ENCODE measurements at regions of chr1 and their contacts with region 1.

Region 1: GRCh38 chr1:186985889-186986491 is 157.2 kb downstream of the PLA2G4A start:
- DNase-seq: no peak
- H3K4me3 ChIP-seq: no peak overlapping the region
- H3K27ac ChIP-seq: peak overlapping the region in 2 of 4 donors; percentile 11 to 66
- H3K4me1 ChIP-seq: peaks cover 0 to 14% (median 6%) of the 10 kb centered on the region in 4 donors
- H3K27me3 ChIP-seq: no peaks in the 10 kb centered on the region
- CTCF ChIP-seq: peak; percentile 55 to 85 (median 63)
- EP300 ChIP-seq: no peak
- POLR2A ChIP-seq: no peak

Region 2: GRCh38 chr1:186404454-186405051 is 581.4 kb before region 1 on chr1:
- in situ Hi-C with region 1: loop called in 1 of 4 experiments (anchors 10 kb)
- intact Hi-C with region 1: no loop called
- DNase-seq: no peak
- H3K4me3 ChIP-seq: no peak overlapping the region
- H3K27ac ChIP-seq: no peak overlapping the region
- H3K4me1 ChIP-seq: no peaks in the 10 kb centered on the region
- H3K27me3 ChIP-seq: no peaks in the 10 kb centered on the region
- CTCF ChIP-seq: peak; percentile 51 to 64 (median 62)
- EP300 ChIP-seq: no peak
- POLR2A ChIP-seq: no peak

Region 3: GRCh38 chr1:186482661-186483255 is 503.2 kb before region 1 on chr1:
- in situ Hi-C with region 1: loop called in 2 of 4 experiments (anchors 5 to 10 kb)
- intact Hi-C with region 1: no loop called
- DNase-seq: peak; percentile 25
- H3K4me3 ChIP-seq: no peak overlapping the region
- H3K27ac ChIP-seq: no peak overlapping the region
- H3K4me1 ChIP-seq: no peaks in the 10 kb centered on the region
- H3K27me3 ChIP-seq: no peaks in the 10 kb centered on the region
- CTCF ChIP-seq: peak; percentile 54 to 67 (median 63)
- EP300 ChIP-seq: no peak
- POLR2A ChIP-seq: no peak

Region 4: GRCh38 chr1:186605762-186606350 is 380.1 kb before region 1 on chr1:
- in situ Hi-C with region 1: loop called (anchors 10 to 25 kb)
- intact Hi-C with region 1: loop called (anchors 2 kb)
- DNase-seq: peak; percentile 30
- H3K4me3 ChIP-seq: no peak overlapping the region
- H3K27ac ChIP-seq: no peak overlapping the region
- H3K4me1 ChIP-seq: no peaks in the 10 kb centered on the region
- H3K27me3 ChIP-seq: no peaks in the 10 kb centered on the region
- CTCF ChIP-seq: peak; percentile 37 to 59 (median 46)
- EP300 ChIP-seq: no peak
- POLR2A ChIP-seq: no peak

Region 5: GRCh38 chr1:186618401-186619170 is 367.4 kb before region 1 on chr1:
- in situ Hi-C with region 1: loop called in 3 of 4 experiments (anchors 10 to 25 kb)
- intact Hi-C with region 1: no loop called
- DNase-seq: peak; percentile 66
- H3K4me3 ChIP-seq: peak overlapping the region in 2 of 4 donors; percentile 12 to 40
- H3K27ac ChIP-seq: peak overlapping the region in 3 of 4 donors; percentile 1 to 43 (median 17)
- H3K4me1 ChIP-seq: peaks cover 0 to 14% (median 0%) of the 10 kb centered on the region in 4 donors
- H3K27me3 ChIP-seq: no peaks in the 10 kb centered on the region
- CTCF ChIP-seq: no peak
- EP300 ChIP-seq: no peak
- POLR2A ChIP-seq: no peak

Region 6: GRCh38 chr1:186722711-186723309 is 263.2 kb before region 1 on chr1:
- in situ Hi-C with region 1: loop called in 1 of 4 experiments (anchors 25 kb)
- intact Hi-C with region 1: no loop called
- DNase-seq: no peak
- H3K4me3 ChIP-seq: no peak overlapping the region
- H3K27ac ChIP-seq: no peak overlapping the region
- H3K4me1 ChIP-seq: no peaks in the 10 kb centered on the region
- H3K27me3 ChIP-seq: no peaks in the 10 kb centered on the region
- CTCF ChIP-seq: peak in 4 of 5 experiments; percentile 30 to 56 (median 48)
- EP300 ChIP-seq: no peak
- POLR2A ChIP-seq: no peak

Measured in transverse colon (tissue), 4 donors.